Posterior vena cava (tissue), 2 donors: ENCODE measurements at regions of chr9 and their contacts with region 1.

Region 1: DNA sequence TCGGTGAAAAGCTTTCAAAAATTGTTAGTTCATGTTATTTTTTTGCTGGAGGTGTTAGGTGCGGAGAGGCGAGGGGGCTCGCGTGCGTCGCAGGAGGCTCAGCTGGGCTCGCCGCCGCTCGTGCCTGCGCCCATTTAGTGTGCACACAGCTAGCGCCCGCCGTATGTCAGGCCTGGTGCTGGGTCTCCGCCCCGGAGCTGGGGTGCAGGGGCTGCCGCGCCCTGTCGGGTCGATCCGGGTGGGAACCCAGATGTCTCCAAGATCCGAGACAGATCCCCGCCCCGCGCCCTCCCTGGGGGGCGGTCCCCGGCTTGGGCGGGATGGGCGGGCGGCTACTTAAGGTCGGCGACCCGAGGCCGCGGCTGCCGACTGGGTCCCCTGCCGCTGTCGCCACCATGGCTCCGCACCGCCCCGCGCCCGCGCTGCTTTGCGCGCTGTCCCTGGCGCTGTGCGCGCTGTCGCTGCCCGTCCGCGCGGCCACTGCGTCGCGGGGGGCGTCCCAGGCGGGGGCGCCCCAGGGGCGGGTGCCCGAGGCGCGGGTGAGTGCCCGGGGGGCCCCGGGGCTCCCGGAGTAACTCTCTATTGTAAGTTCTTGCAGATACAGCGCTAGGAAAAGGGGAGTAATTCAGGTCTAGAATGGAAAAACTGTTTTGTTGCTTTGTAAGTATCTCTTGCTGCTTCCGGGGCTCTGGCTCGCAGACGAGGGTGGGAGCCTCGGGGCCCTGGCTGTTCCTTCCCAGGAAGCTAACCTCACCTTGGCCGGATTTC is 31.7 kb downstream of the GSN start:
- DNase-seq: peak; percentile 93

Region 2: DNA sequence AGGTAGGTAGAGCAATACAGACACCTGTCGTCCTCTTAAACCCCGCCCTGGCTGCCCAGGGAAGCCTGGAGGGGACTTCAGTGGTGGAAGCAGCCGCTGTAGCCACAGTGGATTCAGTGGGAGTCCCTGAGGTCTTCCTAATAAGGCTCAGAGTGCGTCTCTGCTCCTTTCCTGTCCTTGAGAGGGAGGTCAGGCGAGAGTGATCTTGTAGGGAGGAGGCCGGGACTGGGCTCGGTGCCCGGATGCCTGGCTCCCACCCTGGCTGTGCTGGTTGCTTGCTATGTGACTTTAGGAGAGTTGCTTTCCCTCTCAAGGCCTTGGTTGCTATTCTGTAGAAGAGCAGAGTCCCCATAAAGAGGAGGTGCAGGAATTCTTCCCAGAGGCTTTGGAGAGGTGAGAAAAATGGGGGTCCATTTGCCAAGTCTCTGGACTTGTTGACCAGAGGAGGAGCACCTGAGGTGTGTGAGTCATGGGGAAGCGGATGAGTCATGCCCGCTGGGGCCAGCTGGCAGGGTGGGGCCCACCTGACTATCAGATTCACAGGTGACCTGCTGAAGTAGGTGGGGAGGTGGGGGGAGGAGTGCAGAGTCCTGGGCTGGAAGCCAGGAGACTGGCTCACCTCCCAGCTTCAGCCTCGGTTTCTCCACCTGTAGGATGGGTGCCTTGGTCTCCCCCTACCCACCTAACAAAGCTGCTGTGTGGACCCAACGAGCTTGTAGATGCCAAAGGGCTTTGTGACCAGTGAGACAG is 17.9 kb before region 1 on chr9:
- intact Hi-C with region 1: loop called in 1 of 2 experiments (anchors 2 kb)
- DNase-seq: peak; percentile 93